PC-3 (cell line): ENCODE measurements at regions of chr7 and their contacts with region 1.

Region 1: GRCh38 chr7:77455324-77455723 is 39.2 kb upstream of the GSAP start:
- DNase-seq: peak; percentile 92
- ATAC-seq: peak; percentile 86
- H3K4me3 ChIP-seq: peak overlapping the region; percentile 47
- H3K27ac ChIP-seq: peak overlapping the region; percentile 89
- H3K4me1 ChIP-seq: peaks cover 68% of the 10 kb centered on the region
- H3K27me3 ChIP-seq: no peaks in the 10 kb centered on the region
- CTCF ChIP-seq: no peak

Region 2: DNA sequence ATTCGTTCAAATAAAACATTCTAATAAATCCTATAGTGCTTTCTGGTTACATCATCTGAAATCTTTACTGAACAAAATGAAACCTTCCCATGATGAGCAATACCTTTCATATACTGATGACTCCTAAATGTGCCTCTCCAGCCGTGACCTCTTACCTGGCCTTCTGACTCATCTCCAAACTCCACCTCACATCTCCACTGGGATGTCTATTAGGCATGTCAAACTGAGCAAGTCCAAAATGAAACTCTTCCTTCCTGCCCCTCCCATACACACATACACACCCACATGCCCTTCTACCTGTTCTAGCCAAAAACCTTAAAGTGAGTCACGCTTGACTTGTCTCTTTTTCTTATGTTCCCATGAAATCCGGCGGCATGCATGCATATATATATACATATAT is 62.1 kb before region 1 on chr7:
- CTCF ChIA-PET with region 1: no interaction called
- POLR2A ChIA-PET with region 1: no interaction called
- intact Hi-C with region 1: loop called (anchors 2 kb)
- DNase-seq: peak; percentile 96
- ATAC-seq: peak; percentile 98
- H3K4me3 ChIP-seq: no peak overlapping the region
- H3K27ac ChIP-seq: peak overlapping the region; percentile 88
- H3K4me1 ChIP-seq: peaks cover 25% of the 10 kb centered on the region
- H3K27me3 ChIP-seq: no peaks in the 10 kb centered on the region
- CTCF ChIP-seq: no peak

Region 3: GRCh38 chr7:77415823-77416622 is 39.3 kb before region 1 on chr7 and contains the start of gene GSAP:
- CTCF ChIA-PET with region 1: interaction called, 4 read pairs
- POLR2A ChIA-PET with region 1: no interaction called
- intact Hi-C with region 1: loop called (anchors 2 kb)
- DNase-seq: peak; percentile 64
- ATAC-seq: peak; percentile 69
- H3K4me3 ChIP-seq: peak within 1 kb of the TSS; percentile 78
- H3K27ac ChIP-seq: peak within 1 kb of the TSS; percentile 65
- H3K4me1 ChIP-seq: peaks cover 58% of the 10 kb centered on the region
- H3K27me3 ChIP-seq: no peaks in the 10 kb centered on the region
- CTCF ChIP-seq: no peak; the same call in 1 of the 2 replicates
- total RNA-seq, gene GSAP: 2.5 and 6.5 TPM in 2 replicates

Region 4: GRCh38 chr7:77439572-77439971 is 15.8 kb before region 1 on chr7:
- CTCF ChIA-PET with region 1: interaction called, 3 read pairs
- POLR2A ChIA-PET with region 1: interaction called, 4 read pairs
- intact Hi-C with region 1: loop called (anchors 1 kb)
- DNase-seq: peak; percentile 65
- ATAC-seq: peak; percentile 70
- H3K4me3 ChIP-seq: no peak overlapping the region
- H3K27ac ChIP-seq: no peak overlapping the region
- H3K4me1 ChIP-seq: peaks cover 42% of the 10 kb centered on the region
- H3K27me3 ChIP-seq: no peaks in the 10 kb centered on the region
- CTCF ChIP-seq: peak; percentile 70

Region 5: GRCh38 chr7:77479536-77480088 is 24.3 kb after region 1 on chr7:
- CTCF ChIA-PET with region 1: no interaction called
- POLR2A ChIA-PET with region 1: no interaction called
- intact Hi-C with region 1: loop called (anchors 1 kb)
- DNase-seq: peak; percentile 76
- ATAC-seq: peak; percentile 92
- H3K4me3 ChIP-seq: no peak overlapping the region
- H3K27ac ChIP-seq: peak overlapping the region; percentile 43
- H3K4me1 ChIP-seq: peaks cover 31% of the 10 kb centered on the region
- H3K27me3 ChIP-seq: no peaks in the 10 kb centered on the region
- CTCF ChIP-seq: no peak

Region 6: DNA sequence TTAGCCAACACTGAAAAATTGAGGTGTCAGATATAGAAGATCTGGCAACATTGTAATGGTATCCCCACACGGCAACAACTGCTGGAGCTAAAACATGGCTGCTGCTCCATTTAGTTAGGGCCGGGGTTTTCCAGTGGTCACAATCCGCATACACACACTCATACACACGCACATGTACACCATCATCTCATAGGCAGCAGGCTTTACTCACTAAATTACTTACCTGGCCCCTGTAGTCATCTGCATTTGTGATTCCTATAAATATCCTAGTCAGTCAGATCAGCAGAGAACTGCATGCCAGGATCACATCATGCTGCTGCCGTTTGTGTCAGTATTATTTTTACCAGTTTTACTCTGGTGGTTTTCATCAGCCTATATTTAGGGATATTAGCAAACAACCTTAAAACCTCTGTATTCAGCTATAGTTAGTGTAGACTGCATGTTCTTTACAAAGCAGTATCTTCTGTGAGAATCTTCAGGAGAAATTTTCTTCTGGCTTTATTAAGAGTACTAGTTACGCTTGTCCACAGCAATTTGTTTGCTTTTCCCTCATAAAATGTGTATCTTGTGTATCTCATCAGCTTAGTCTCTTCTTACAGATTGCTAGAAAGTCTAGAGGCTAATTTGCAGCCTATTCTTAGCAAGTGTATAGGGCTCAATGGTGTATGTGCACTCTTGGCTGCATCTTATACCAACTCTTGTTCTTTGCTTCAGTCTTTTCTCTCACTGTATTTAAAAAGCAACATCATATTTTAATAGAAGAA is 43.5 kb after region 1 on chr7:
- CTCF ChIA-PET with region 1: interaction called, 3 read pairs
- POLR2A ChIA-PET with region 1: no interaction called
- intact Hi-C with region 1: loop called (anchors 5 kb)
- DNase-seq: peak; percentile 41
- ATAC-seq: peak; percentile 82
- H3K4me3 ChIP-seq: peak overlapping the region; percentile 43
- H3K27ac ChIP-seq: peak overlapping the region; percentile 43
- H3K4me1 ChIP-seq: peaks cover 22% of the 10 kb centered on the region
- H3K27me3 ChIP-seq: no peaks in the 10 kb centered on the region
- CTCF ChIP-seq: no peak

Region 7: DNA sequence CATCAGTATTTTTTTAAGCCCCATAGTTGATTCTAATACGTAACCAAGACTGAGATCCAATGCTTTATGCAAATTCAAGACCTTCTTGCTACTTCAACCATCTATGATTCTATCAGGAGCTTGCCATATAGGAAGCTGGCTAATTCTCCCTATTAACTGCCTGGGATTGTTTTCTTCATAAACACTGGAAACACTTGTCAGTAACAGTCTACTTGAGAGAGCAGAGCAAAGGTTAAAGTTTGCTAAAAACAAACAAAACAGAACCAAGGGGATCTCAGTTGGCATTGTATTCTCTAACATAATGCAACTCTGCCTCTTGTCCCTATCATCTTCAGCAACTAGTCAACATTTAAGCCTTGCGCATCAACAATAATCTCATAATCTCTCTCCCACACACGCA is 60.8 kb after region 1 on chr7:
- CTCF ChIA-PET with region 1: no interaction called
- POLR2A ChIA-PET with region 1: no interaction called
- intact Hi-C with region 1: no loop called
- DNase-seq: no peak
- ATAC-seq: no peak
- H3K4me3 ChIP-seq: no peak overlapping the region
- H3K27ac ChIP-seq: no peak overlapping the region
- H3K4me1 ChIP-seq: no peaks in the 10 kb centered on the region
- H3K27me3 ChIP-seq: no peaks in the 10 kb centered on the region
- CTCF ChIP-seq: no peak

Region 8: GRCh38 chr7:77940647-77941046 is 485.3 kb after region 1 on chr7:
- CTCF ChIA-PET with region 1: no interaction called
- POLR2A ChIA-PET with region 1: no interaction called
- intact Hi-C with region 1: no loop called
- DNase-seq: peak; percentile 45
- ATAC-seq: peak; percentile 59
- H3K4me3 ChIP-seq: no peak overlapping the region
- H3K27ac ChIP-seq: no peak overlapping the region
- H3K4me1 ChIP-seq: no peaks in the 10 kb centered on the region
- H3K27me3 ChIP-seq: no peaks in the 10 kb centered on the region
- CTCF ChIP-seq: peak; percentile 79